ENCODE measurements at regions of chr14 and their contacts with region 1.

Region 1: GRCh38 chr14:59483900-59484638 is at the starts of genes JKAMP and L3HYPDH:
- DNase-seq: peak; percentile 98
- H3K4me3 Mint-ChIP-seq: peak within 1 kb of the TSS; percentile 91
- H3K27ac Mint-ChIP-seq: peak within 1 kb of the TSS; percentile 83
- H3K4me1 Mint-ChIP-seq: peaks cover 49% of the 10 kb centered on the region
- H3K27me3 Mint-ChIP-seq: no peaks in the 10 kb centered on the region
- total RNA-seq, gene JKAMP: 15.2 to 15.6 TPM
- total RNA-seq, gene L3HYPDH: 7.0 to 7.6 TPM

Region 2: GRCh38 chr14:58565832-58566231 is 918.2 kb before region 1 on chr14:
- CTCF ChIA-PET with region 1: no interaction called
- intact Hi-C with region 1: loop called (anchors 5 kb)
- DNase-seq: no peak
- H3K4me3 Mint-ChIP-seq: no peak overlapping the region
- H3K27ac Mint-ChIP-seq: no peak overlapping the region
- H3K4me1 Mint-ChIP-seq: peaks cover 21% of the 10 kb centered on the region
- H3K27me3 Mint-ChIP-seq: no peaks in the 10 kb centered on the region

Region 3: GRCh38 chr14:59464486-59465315 is 19.4 kb before region 1 on chr14:
- CTCF ChIA-PET with region 1: interaction called, 8 read pairs
- intact Hi-C with region 1: loop called (anchors 1 kb)
- DNase-seq: peak; percentile 64
- H3K4me3 Mint-ChIP-seq: peak overlapping the region; percentile 80
- H3K27ac Mint-ChIP-seq: no peak overlapping the region
- H3K4me1 Mint-ChIP-seq: peaks cover 7% of the 10 kb centered on the region
- H3K27me3 Mint-ChIP-seq: peaks cover 8% of the 10 kb centered on the region

Region 4: DNA sequence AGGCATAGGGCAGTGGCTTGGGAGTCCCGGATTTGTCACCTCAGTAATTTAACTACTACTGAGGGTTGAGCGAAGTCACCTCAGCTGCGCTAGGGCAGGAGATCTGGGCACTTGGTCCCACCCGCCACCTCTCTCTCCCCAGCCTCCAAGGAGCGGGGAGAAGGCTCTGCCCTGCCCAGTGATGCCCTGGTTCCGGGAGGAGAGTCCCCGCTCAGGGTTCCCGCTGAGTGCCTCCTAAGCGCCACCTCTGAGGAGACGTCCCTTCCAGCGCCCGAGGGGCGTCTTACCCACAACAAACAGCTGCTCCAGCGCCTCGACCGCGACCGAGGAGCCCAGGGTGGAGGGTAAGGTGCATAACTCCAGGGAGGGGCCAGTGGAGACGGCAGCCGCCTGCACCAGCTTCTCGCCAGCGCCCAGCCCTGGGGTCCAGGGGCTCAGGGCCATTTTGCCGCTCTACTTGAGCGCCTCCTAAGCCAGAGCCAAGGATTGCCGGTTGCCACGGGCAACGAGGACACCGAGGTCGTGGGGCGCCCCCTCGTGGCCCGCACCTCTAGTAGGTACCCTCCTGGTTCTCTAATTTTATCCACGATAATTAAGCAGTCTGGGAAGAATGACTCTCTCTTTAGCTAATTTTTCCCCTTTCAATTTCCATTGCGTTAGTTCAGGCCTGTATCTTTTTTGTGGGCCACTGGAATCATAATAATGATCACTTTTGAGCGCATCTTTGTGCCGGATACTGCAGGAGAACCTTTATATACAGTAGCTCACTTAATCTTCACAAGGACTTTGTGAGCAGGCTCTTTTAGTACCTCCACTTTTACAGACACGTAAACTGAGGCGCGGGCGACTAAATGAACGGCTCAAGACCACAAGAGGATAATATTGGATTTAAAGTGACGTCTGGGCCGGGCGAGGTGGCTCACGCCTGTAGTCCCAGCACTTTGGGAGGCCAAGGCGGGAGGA is 92.5 kb after region 1 on chr14 and contains the start of gene CCDC175:
- CTCF ChIA-PET with region 1: interaction called, 17 read pairs
- intact Hi-C with region 1: loop called (anchors 1 kb)
- DNase-seq: peak; percentile 89
- H3K4me3 Mint-ChIP-seq: peak within 1 kb of the TSS; percentile 65
- H3K27ac Mint-ChIP-seq: no peak within 1 kb of the TSS
- H3K4me1 Mint-ChIP-seq: peaks cover 5% of the 10 kb centered on the region
- H3K27me3 Mint-ChIP-seq: peaks cover 3% of the 10 kb centered on the region
- total RNA-seq, gene CCDC175: not detected

Region 5: DNA sequence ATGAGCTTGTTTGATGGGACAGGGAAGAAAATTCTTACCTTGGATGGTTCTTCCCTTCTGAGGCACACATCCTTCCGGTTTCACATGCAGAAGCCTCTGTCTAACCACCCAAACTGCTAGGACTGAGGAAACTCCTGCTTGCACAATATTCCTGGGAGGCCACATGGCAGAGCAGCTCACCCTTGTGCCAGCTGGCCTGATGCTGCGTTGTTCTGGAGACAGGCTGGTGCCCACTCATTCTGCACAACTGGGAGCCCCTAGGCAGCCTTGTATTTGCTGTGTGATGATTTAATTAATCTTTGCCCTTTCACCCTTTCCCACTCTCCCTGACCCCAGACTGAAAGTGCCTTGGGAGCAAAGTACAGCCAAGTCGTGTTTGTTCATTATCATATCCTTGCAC is 255.7 kb after region 1 on chr14:
- CTCF ChIA-PET with region 1: no interaction called
- intact Hi-C with region 1: no loop called
- DNase-seq: no peak
- H3K4me3 Mint-ChIP-seq: no peak overlapping the region
- H3K27ac Mint-ChIP-seq: no peak overlapping the region
- H3K4me1 Mint-ChIP-seq: no peaks in the 10 kb centered on the region
- H3K27me3 Mint-ChIP-seq: no peaks in the 10 kb centered on the region

Region 6: GRCh38 chr14:59918824-59919569 is 434.9 kb after region 1 on chr14:
- CTCF ChIA-PET with region 1: no interaction called
- intact Hi-C with region 1: loop called (anchors 10 kb)
- DNase-seq: peak; percentile 27
- H3K4me3 Mint-ChIP-seq: peak overlapping the region; percentile 54
- H3K27ac Mint-ChIP-seq: no peak overlapping the region
- H3K4me1 Mint-ChIP-seq: peaks cover 7% of the 10 kb centered on the region
- H3K27me3 Mint-ChIP-seq: peaks cover 43% of the 10 kb centered on the region

Region 7: GRCh38 chr14:60091550-60092530 is 607.8 kb after region 1 on chr14 and contains the start of gene PCNX4:
- CTCF ChIA-PET with region 1: no interaction called
- intact Hi-C with region 1: loop called (anchors 5 kb)
- DNase-seq: peak; percentile 95
- H3K4me3 Mint-ChIP-seq: peak within 1 kb of the TSS; percentile 98
- H3K27ac Mint-ChIP-seq: peak within 1 kb of the TSS; percentile 95
- H3K4me1 Mint-ChIP-seq: peaks cover 34% of the 10 kb centered on the region
- H3K27me3 Mint-ChIP-seq: peaks cover 9% of the 10 kb centered on the region
- total RNA-seq, gene PCNX4: 24.9 to 27.5 TPM

Region 8: DNA sequence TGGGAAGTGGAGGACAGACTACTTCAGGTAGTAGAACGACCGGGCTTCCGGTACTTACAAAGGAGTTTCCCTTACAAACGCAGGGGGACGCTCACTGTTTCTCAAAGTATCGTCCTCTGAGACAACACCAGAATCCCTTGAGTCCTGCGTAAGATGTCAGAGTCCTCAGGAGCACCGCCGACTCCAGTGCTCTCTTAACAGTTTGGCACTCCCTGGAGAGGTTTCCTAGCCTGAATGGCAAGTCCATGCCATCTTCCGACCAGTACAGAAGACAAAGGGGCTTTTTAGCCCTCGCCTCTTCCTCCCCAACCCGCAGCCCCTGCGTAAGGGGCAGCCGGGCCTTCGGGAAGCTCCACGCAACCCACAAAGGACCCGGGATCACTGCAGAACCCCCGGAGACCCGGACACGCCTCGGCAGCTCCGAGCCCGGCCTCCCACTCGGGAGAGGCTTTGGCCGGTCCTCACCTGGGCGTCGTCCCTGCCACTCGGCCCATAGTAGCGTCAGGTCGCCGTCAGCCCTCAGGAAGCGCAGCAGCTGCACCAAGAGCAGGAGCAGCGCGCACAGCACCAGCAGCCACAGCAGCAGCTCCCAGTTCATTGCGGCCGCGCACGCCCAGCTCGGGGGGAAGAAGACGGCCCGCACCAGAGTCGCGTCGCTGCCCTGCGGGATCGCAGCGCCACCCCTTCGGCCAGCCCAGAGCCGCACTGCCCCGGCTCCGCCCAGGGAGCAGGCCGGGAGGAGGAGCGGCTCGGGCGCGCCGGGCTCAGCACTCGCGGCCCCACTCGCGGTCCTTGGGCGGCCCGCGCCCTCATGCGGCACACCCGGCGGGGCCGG is 680.9 kb after region 1 on chr14 and contains the start of gene DHRS7:
- CTCF ChIA-PET with region 1: no interaction called
- intact Hi-C with region 1: loop called (anchors 5 kb)
- DNase-seq: peak; percentile 65
- H3K4me3 Mint-ChIP-seq: peak within 1 kb of the TSS; percentile 89
- H3K27ac Mint-ChIP-seq: peak within 1 kb of the TSS; percentile 96
- H3K4me1 Mint-ChIP-seq: peaks cover 39% of the 10 kb centered on the region
- H3K27me3 Mint-ChIP-seq: no peaks in the 10 kb centered on the region
- total RNA-seq, gene DHRS7: 40.5 to 43.4 TPM